K562 (cell line): ENCODE measurements at regions of chr17 and their contacts with region 1.

Region 1: DNA sequence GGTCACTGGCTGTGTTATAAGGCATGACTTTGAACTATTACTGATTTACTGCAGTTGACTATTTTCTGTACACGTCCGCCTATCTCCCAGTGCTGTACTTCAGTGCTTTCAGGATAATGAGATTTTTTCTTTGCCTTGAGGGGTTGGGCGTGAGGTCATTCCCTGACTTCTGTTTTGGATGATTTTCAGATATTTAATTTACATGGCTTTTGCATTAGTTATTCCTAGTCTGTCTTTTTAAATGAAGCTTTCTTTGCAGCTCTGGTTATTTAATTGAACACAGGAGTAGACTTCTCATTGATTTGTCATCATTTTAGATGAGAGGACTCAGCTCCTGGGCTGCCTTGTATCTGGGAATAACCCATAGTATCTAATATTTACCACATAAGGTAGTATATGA is 23.7 kb downstream of the WIPF2 start:
- DNase-seq: no peak
- ATAC-seq: no peak
- H3K4me3 ChIP-seq: no peak overlapping the region
- H3K27ac ChIP-seq: no peak overlapping the region
- H3K4me1 ChIP-seq: no peaks in the 10 kb centered on the region; a peak in 1 of 5 replicates
- H3K27me3 ChIP-seq: no peaks in the 10 kb centered on the region
- CTCF ChIP-seq: no peak
- EP300 ChIP-seq: no peak
- POLR2A ChIP-seq: no peak
- RAD21 ChIP-seq: no peak

Region 2: DNA sequence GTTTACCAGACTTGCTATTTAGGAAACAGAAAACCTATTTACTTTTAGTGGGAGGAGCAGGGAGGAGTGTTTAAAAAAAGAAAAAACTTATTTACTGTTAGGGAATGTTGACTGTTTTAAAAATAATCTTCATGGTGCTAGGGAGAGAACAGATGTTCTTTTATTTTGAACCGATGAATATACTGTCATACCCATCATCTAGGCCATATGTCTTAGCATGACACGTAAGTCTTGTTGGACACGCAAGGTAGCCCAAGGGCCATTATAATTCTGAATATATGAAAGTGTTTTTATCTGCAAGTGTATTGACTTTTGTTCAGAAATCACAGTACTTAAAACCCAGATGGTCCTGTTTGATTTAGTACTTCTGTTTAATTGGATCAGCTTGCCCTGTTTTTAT is 12.1 kb before region 1 on chr17:
- CTCF ChIA-PET with region 1: no interaction called
- POLR2A ChIA-PET with region 1: interaction called, 16 read pairs
- in situ Hi-C with region 1: no loop called
- intact Hi-C with region 1: no loop called
- DNase-seq: no peak
- ATAC-seq: no peak
- H3K4me3 ChIP-seq: no peak overlapping the region
- H3K27ac ChIP-seq: no peak overlapping the region
- H3K4me1 ChIP-seq: no peaks in the 10 kb centered on the region; a peak in 1 of 5 replicates
- H3K27me3 ChIP-seq: no peaks in the 10 kb centered on the region
- CTCF ChIP-seq: no peak
- EP300 ChIP-seq: no peak
- POLR2A ChIP-seq: no peak
- RAD21 ChIP-seq: no peak